Endothelial cell of umbilical vein (primary cell): ENCODE measurements at regions of chr2 and their contacts with region 1.

Region 1: GRCh38 chr2:25878361-25879132 is at the start of gene ASXL2:
- DNase-seq: peak; percentile 99
- H3K4me3 ChIP-seq: peak within 1 kb of the TSS; percentile 54 to 84 (median 77)
- H3K27ac ChIP-seq: peak within 1 kb of the TSS; percentile 67
- H3K4me1 ChIP-seq: peaks cover 16% of the 10 kb centered on the region
- H3K27me3 ChIP-seq: peaks cover 0 to 5% of the 10 kb centered on the region in 2 experiments
- CTCF ChIP-seq: no peak
- POLR2A ChIP-seq: peak; percentile 91
- total RNA-seq, gene ASXL2: 30.6 and 33.8 TPM in 2 replicates

Region 2: GRCh38 chr2:25673300-25674076 is 205.1 kb before region 1 on chr2 and contains the start of gene DTNB:
- CTCF ChIA-PET with region 1: no interaction called
- POLR2A ChIA-PET with region 1: no interaction called
- dilution Hi-C with region 1: no loop called
- intact Hi-C with region 1: loop called (anchors 2 kb)
- DNase-seq: peak; percentile 64
- H3K4me3 ChIP-seq: peak within 1 kb of the TSS; percentile 23 to 92 (median 66)
- H3K27ac ChIP-seq: no peak within 1 kb of the TSS
- H3K4me1 ChIP-seq: peaks cover 7% of the 10 kb centered on the region
- H3K27me3 ChIP-seq: peaks cover 0 to 4% of the 10 kb centered on the region in 2 experiments
- CTCF ChIP-seq: no peak
- POLR2A ChIP-seq: peak; percentile 66
- total RNA-seq, gene DTNB: 13.9 and 17.0 TPM in 2 replicates

Region 3: DNA sequence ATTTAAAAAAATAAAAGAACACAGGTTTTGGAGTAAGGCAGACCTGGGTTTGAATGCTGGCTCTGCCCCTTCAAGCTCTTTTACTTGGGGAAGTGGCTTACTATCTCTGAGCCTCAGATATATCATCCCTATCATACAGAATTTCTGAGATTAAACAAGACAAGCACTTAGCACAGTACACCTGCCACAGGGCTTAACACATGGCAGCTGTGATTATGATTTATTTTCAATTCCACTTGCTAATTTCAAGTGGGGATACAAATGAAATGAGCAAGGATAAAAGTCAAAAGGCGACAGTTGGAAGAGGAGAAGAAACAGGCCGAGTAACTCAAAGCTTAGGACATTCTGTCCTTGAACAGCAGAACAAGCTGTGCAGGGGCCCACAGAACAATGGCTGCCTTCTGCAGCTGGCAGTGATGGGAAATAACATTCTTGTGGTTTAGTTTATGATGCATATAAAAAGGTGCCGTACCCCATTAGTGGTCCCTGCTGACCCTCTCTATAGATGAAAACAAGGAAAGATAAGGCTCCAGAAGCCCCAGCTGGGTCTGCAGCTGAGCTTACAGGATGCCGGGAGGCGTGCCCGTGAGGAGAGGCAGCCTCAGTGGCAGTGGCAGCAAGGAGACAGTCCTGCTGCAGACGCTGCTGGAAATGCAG is 58.5 kb after region 1 on chr2:
- CTCF ChIA-PET with region 1: no interaction called
- POLR2A ChIA-PET with region 1: no interaction called
- dilution Hi-C with region 1: no loop called
- intact Hi-C with region 1: loop called (anchors 10 kb)
- DNase-seq: no peak
- H3K4me3 ChIP-seq: no peak overlapping the region
- H3K27ac ChIP-seq: no peak overlapping the region
- H3K4me1 ChIP-seq: peaks cover 11% of the 10 kb centered on the region
- H3K27me3 ChIP-seq: no peaks in the 10 kb centered on the region
- CTCF ChIP-seq: no peak
- POLR2A ChIP-seq: no peak

Region 4: GRCh38 chr2:26033818-26034636 is 155.5 kb after region 1 on chr2 and contains the start of gene RAB10:
- CTCF ChIA-PET with region 1: no interaction called
- POLR2A ChIA-PET with region 1: no interaction called
- dilution Hi-C with region 1: no loop called
- intact Hi-C with region 1: loop called (anchors 10 kb)
- DNase-seq: peak; percentile 100
- H3K4me3 ChIP-seq: peak within 1 kb of the TSS; percentile 90 to 97 (median 92)
- H3K27ac ChIP-seq: peak within 1 kb of the TSS; percentile 72
- H3K4me1 ChIP-seq: peaks cover 11% of the 10 kb centered on the region
- H3K27me3 ChIP-seq: no peaks in the 10 kb centered on the region
- CTCF ChIP-seq: no peak
- POLR2A ChIP-seq: peak; percentile 94
- total RNA-seq, gene RAB10: 104 and 105 TPM in 2 replicates